Mammary epithelial cell (primary cell): ENCODE measurements at regions of chr10 and their contacts with region 1.

Region 1: GRCh38 chr10:14302035-14302434 is 28.7 kb downstream of the FRMD4A start:
- DNase-seq: peak; percentile 7
- H3K4me3 ChIP-seq: no peak overlapping the region
- H3K27ac ChIP-seq: no peak overlapping the region
- H3K4me1 ChIP-seq: no peaks in the 10 kb centered on the region
- H3K27me3 ChIP-seq: peaks cover 1% of the 10 kb centered on the region
- CTCF ChIP-seq: peak; percentile 48 to 66

Region 2: DNA sequence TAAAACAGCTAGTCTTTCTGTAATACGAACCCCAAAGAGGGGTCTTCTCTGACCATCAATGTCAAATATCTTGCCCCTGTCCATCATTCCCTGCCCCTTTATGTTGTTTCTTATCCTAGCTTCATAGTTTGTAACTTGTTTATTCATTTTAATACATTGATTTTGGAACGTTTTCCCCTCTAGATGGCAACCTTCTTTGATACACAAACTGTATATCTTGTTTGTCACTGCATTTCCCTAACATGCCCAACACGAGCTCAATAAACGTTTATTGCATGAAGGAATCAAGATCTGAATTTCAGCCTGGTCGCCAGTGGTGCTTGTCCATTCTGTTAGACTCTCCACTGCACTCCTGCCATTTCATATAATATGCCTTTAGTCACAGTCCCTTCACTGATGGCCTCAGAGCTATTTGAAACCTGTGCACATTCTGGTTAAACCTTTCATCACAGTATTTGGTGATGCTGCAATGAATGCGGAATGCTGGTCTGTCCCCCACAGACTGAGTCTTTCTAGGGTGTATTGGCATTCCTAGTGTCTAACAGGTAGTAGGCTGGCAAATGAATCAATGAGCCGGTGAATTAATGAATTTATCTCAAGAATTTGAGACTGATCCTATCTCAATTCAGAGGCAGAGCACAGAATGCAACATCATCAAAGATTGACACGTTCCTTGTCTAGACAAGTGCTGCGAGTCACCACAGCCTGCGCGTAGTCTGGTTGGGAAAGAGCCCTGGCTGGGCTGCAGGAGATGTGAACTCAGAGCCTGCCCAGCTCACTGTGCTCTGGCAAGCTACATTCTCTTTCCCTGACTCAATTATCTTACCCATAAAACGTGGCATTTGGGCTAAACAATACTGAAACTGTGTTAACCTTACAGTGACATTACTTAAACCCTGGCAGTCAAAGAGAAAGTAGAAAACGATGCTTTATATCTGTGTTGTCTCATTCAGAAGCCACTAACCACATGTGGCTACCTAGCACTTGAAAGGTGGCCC is 83.9 kb after region 1 on chr10:
- CTCF ChIA-PET with region 1: no interaction called
- dilution Hi-C with region 1: no loop called
- in situ Hi-C with region 1: no loop called
- intact Hi-C with region 1: loop called (anchors 10 kb)
- DNase-seq: peak; percentile 93
- H3K4me3 ChIP-seq: no peak overlapping the region
- H3K27ac ChIP-seq: peak overlapping the region; percentile 60
- H3K4me1 ChIP-seq: peaks cover 26% of the 10 kb centered on the region
- H3K27me3 ChIP-seq: no peaks in the 10 kb centered on the region
- CTCF ChIP-seq: peak in 1 of 2 donors; percentile 13